ENCODE measurements at regions of chr6 and their contacts with region 1.

Region 1: DNA sequence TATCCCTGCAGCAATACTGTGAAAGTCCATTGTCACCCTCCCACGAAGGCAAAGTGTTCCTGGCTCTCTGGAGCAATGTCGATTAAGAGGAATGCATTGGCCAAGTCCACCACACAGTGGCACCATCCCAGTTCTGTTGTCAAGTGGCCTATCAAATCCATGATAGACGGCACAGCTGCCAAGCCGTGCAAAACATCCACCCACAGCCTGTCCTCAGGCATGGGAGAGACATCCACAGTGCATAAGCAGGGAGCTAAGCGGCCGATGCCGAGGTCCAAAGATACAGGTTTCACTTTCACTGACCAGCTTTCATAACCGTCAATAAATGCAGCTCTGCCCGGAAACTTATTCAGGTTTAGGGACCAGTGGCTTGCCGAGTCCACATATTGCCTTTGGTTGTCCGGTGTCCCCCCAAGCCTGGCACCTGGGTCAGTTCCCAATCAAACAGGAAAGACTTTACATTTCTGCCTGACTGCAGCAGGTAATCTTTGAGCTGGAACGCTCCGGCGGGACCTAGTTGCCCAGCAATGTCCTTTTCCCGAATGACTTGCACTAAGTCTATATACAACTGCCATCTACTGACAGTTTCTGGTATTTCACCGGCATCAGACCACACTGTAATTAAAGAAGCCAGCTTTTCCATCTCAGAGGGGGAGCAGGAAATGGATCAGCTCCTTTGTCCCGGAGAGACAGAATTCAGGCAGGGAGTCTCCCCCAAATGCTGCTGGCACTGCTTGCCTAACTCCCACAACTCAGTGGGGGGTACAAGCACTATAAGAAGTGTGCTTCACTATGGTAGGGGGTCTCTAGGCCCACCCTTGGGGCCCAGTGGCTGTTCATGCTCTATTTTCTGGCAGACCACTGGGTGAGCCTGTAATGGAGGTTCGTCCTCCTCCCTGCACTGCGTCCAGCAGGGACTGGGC is 6.3 kb downstream of the ZKSCAN3 start:
- DNase-seq: peak; percentile 73 to 94 (median 75)
- ATAC-seq: peak; percentile 80
- H3K4me3 ChIP-seq: peak overlapping the region; percentile 42
- H3K27ac ChIP-seq: peak overlapping the region; percentile 76
- H3K4me1 ChIP-seq: peaks cover 44 to 49% of the 10 kb centered on the region in 2 experiments
- H3K27me3 ChIP-seq: no peaks in the 10 kb centered on the region; a peak in 1 of 5 replicates
- CTCF ChIP-seq: peak; percentile 79 to 95 (median 84)
- EP300 ChIP-seq: peak; percentile 57; the same call in 1 of the 2 replicates
- POLR2A ChIP-seq: no peak
- RAD21 ChIP-seq: peak; percentile 91 to 94

Region 2: GRCh38 chr6:27078734-27079357 is 1277.2 kb before region 1 on chr6:
- CTCF ChIA-PET with region 1: no interaction called
- POLR2A ChIA-PET with region 1: no interaction called
- in situ Hi-C with region 1: no loop called
- intact Hi-C with region 1: no loop called
- DNase-seq: peak; percentile 48 to 81 (median 59)
- ATAC-seq: peak; percentile 99
- H3K4me3 ChIP-seq: peak overlapping the region; percentile 51
- H3K27ac ChIP-seq: no peak overlapping the region; the same call in 2 of the 3 replicates
- H3K4me1 ChIP-seq: no peaks in the 10 kb centered on the region; a peak in 1 of 5 replicates
- H3K27me3 ChIP-seq: no peaks in the 10 kb centered on the region
- CTCF ChIP-seq: peak; percentile 68 to 94 (median 92)
- EP300 ChIP-seq: 0 out of 2 replicates have a peak, but pooled peaks have one; percentile 5
- POLR2A ChIP-seq: no peak
- RAD21 ChIP-seq: peak; percentile 96 to 98

Region 3: GRCh38 chr6:27902335-27903314 is 453.4 kb before region 1 on chr6:
- CTCF ChIA-PET with region 1: no interaction called
- POLR2A ChIA-PET with region 1: no interaction called
- in situ Hi-C with region 1: no loop called
- intact Hi-C with region 1: loop called (anchors 5 kb)
- DNase-seq: peak; percentile 69 to 88 (median 75)
- ATAC-seq: peak; percentile 90
- H3K4me3 ChIP-seq: peak overlapping the region; percentile 39
- H3K27ac ChIP-seq: peak overlapping the region; percentile 79
- H3K4me1 ChIP-seq: peaks cover 7 to 28% of the 10 kb centered on the region in 2 experiments; a peak in 4 of 5 replicates
- H3K27me3 ChIP-seq: no peaks in the 10 kb centered on the region
- CTCF ChIP-seq: no peak
- EP300 ChIP-seq: peak; percentile 76
- POLR2A ChIP-seq: peak; percentile 99
- RAD21 ChIP-seq: peak; percentile 25 to 32; a peak in 3 of 4 replicates

Region 4: DNA sequence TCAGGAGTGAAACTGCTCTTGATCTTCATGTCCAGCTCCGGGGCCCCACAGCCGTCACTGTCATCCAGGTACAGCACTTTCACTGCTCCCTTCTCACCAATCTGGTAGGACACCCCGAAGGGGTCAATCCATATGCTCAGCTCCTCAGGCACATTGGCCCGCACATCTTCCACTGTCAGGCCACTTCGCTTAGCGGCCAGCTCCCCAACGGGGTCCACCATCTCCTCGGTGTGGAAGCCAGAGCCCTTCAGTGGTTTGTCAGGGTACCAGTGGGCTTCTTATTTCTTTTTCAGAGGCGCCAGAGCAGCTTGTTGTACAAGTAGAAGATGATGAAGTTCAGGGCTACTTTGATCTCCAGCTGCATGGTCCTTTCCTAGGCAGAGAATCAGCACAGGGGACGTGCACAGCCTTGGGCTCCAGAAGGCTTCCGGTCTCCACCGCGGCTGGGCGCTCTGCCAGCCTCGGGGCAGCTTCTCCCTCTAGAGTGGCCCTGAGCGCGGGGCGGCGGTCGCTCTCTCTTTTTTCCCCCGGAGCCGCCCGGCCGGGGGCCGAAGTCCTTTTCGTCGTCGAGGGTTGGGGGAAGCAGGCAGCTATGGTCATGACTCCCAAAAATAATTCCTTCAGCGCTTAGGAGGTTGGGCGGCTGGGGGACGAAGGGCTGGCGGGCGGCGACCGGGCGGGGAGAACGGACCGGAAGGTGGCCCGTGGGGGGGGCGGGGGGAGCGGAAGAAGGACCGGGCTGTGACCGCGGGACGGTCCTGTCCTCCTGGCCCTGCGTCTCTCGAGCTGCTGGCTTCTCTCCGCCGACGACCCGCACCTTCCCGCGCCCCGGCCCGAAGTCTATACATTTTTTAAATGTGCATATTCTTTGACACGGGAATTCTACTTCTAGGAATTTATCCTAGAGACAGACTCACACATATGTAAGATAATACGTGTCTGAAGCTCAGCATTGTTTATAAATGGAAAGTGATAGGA is 137.4 kb before region 1 on chr6:
- CTCF ChIA-PET with region 1: no interaction called
- POLR2A ChIA-PET with region 1: interaction called, 10 read pairs
- in situ Hi-C with region 1: no loop called
- intact Hi-C with region 1: loop called (anchors 2 kb)
- DNase-seq: peak; percentile 89 to 95 (median 92)
- ATAC-seq: peak; percentile 84
- H3K4me3 ChIP-seq: peak overlapping the region; percentile 62
- H3K27ac ChIP-seq: peak overlapping the region; percentile 81
- H3K4me1 ChIP-seq: peaks cover 33 to 44% of the 10 kb centered on the region in 2 experiments
- H3K27me3 ChIP-seq: no peaks in the 10 kb centered on the region
- CTCF ChIP-seq: peak in 2 of 3 experiments; percentile 13 to 32; a peak in 1 of 6 replicates
- EP300 ChIP-seq: peak; percentile 36; the same call in 1 of the 2 replicates
- POLR2A ChIP-seq: peak; percentile 82
- RAD21 ChIP-seq: no peak; a peak in 1 of 4 replicates

Region 5: GRCh38 chr6:28281288-28282064 is 74.5 kb before region 1 on chr6 and contains the start of gene PGBD1:
- CTCF ChIA-PET with region 1: no interaction called
- POLR2A ChIA-PET with region 1: interaction called, 5 read pairs
- in situ Hi-C with region 1: no loop called
- intact Hi-C with region 1: loop called (anchors 1 kb)
- DNase-seq: peak; percentile 76 to 92 (median 86)
- ATAC-seq: peak; percentile 97
- H3K4me3 ChIP-seq: peak within 1 kb of the TSS; percentile 73
- H3K27ac ChIP-seq: peak within 1 kb of the TSS; percentile 48
- H3K4me1 ChIP-seq: peaks cover 4 to 7% of the 10 kb centered on the region in 2 experiments; a peak in 2 of 5 replicates
- H3K27me3 ChIP-seq: no peaks in the 10 kb centered on the region
- CTCF ChIP-seq: no peak; a peak in 1 of 6 replicates
- EP300 ChIP-seq: no peak
- POLR2A ChIP-seq: peak; percentile 82
- RAD21 ChIP-seq: peak; percentile 28 to 35
- polyA plus RNA-seq, gene PGBD1: 3.3 to 3.5 TPM

Region 6: DNA sequence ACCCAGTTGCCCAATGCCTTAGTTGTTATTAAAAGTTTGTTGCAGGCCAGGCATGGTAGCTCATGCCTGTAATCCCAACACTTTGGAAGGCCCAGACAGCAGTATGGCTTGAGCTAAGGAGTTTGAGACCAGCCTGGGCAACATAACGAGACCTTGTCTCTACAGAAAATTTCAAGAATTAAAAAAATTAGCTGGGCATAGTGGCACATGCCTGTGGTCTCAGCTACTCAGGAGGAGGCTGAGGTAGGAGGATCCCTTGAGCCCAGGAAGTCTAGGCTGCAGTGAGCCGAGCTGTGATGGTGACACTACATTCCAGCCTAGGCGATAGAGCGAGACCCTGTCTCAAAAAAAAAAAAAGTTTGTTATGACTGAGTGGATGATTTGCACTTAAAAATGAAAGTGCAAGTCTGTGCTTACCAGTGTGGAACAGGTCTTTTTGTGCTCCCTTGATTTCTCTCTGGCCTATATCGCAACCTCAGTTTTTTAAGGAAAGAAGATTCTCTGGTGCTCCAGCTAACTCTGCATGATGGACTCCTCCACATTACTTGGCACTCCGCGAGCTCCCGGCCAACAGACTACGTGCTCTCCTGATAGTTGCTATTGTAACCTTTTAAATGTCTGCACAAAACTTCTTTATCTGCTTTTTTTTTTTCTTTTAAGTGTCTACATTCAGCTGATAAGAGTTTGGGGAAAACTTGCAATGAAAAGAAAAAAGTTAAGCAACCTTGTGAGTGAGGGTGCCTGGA is 15.9 kb after region 1 on chr6:
- CTCF ChIA-PET with region 1: no interaction called
- POLR2A ChIA-PET with region 1: interaction called, 13 read pairs
- in situ Hi-C with region 1: no loop called
- intact Hi-C with region 1: no loop called
- DNase-seq: peak in 2 of 4 experiments; percentile 34 to 58
- ATAC-seq: peak; percentile 71
- H3K4me3 ChIP-seq: no peak overlapping the region
- H3K27ac ChIP-seq: no peak overlapping the region
- H3K4me1 ChIP-seq: peaks cover 3 to 14% of the 10 kb centered on the region in 2 experiments; a peak in 3 of 5 replicates
- H3K27me3 ChIP-seq: no peaks in the 10 kb centered on the region
- CTCF ChIP-seq: no peak
- EP300 ChIP-seq: no peak
- POLR2A ChIP-seq: no peak
- RAD21 ChIP-seq: no peak

Region 7: DNA sequence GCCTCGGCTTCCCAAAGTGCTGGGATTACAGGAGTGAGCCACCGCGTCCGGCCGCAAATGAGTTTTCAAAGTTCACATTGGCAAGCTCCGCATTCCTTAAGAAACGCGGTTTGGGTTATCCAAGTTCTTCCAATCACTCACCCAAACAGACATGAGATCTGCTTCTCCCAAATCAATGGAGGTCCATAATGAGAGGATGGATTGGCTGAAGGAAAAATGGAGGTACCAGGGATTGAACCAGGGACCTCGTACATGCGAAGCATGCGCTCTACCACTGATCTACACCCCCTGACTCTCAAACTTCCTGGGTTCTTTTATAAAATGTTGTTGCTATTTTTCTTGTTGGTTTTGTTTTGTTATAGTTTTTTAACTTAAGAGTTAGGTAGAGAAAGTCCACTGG is 339.7 kb after region 1 on chr6:
- CTCF ChIA-PET with region 1: no interaction called
- POLR2A ChIA-PET with region 1: no interaction called
- in situ Hi-C with region 1: no loop called
- intact Hi-C with region 1: no loop called
- DNase-seq: no peak
- ATAC-seq: no peak
- H3K4me3 ChIP-seq: no peak overlapping the region
- H3K27ac ChIP-seq: no peak overlapping the region
- H3K4me1 ChIP-seq: peaks cover 6 to 7% of the 10 kb centered on the region in 2 experiments; a peak in 3 of 5 replicates
- H3K27me3 ChIP-seq: no peaks in the 10 kb centered on the region; a peak in 1 of 5 replicates
- CTCF ChIP-seq: no peak
- EP300 ChIP-seq: no peak
- POLR2A ChIP-seq: no peak
- RAD21 ChIP-seq: no peak

Measured in K562 (cell line).